Ascending aorta (tissue), 2 donors: ENCODE measurements at regions of chr16 and their contacts with region 1.

Region 1: GRCh38 chr16:78770353-78771091 is 671.1 kb downstream of the WWOX start:
- DNase-seq: peak in 1 of 2 donors; percentile 79
- H3K4me3 ChIP-seq: no peak overlapping the region
- H3K27ac ChIP-seq: no peak overlapping the region
- H3K4me1 ChIP-seq: peaks cover 0 to 2% of the 10 kb centered on the region in 2 donors
- H3K27me3 ChIP-seq: no peaks in the 10 kb centered on the region
- CTCF ChIP-seq: peak; percentile 40 to 71 (median 66)

Region 2: DNA sequence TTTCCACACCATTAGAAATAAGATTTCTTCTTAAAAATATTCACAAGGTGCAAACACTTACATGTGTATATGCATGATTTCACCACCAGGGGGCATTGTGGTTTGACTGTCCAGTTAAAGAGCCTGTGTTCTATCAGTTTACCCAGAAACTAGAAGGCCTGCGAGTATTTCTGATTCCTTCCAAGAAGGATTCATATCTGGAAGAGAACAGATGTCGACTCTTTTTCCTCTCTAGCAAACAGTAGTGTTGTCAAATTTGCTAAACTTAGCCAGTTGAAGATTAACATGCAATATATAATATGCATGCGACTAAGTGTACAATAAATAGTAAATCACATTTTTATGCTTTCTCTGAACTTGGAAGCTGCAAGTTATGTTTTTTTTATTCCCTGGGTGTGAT is 266.9 kb before region 1 on chr16:
- intact Hi-C with region 1: loop called (anchors 2 kb)
- DNase-seq: no peak
- H3K4me3 ChIP-seq: no peak overlapping the region
- H3K27ac ChIP-seq: no peak overlapping the region
- H3K4me1 ChIP-seq: peaks cover 0 to 9% of the 10 kb centered on the region in 2 donors
- H3K27me3 ChIP-seq: no peaks in the 10 kb centered on the region
- CTCF ChIP-seq: peak; percentile 57 to 84 (median 75)

Region 3: DNA sequence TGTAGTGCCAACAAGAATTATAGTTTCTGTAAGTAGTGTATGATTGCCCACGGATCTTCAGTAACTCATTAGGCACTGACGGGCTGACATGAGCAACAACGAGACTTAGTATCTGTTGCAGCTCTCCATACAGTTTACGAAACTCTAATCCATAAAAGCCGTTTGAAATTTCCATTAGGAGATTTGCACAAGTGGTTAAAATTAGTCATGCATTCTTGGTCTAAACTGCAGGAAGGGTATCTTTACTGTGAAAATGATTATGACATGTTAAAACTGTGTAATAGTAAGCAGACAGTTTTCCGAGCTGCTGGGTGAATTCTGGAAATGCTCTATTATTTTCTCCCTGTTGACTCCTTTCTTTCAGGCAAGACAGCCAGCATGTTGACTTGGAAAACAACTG is 66.1 kb before region 1 on chr16:
- intact Hi-C with region 1: no loop called
- DNase-seq: no peak
- H3K4me3 ChIP-seq: no peak overlapping the region
- H3K27ac ChIP-seq: no peak overlapping the region
- H3K4me1 ChIP-seq: no peaks in the 10 kb centered on the region
- H3K27me3 ChIP-seq: no peaks in the 10 kb centered on the region
- CTCF ChIP-seq: no peak